ENCODE measurements at regions of chr7 and their contacts with region 1.

Region 1: GRCh38 chr7:27834179-27834921 is 94.4 kb downstream of the TAX1BP1 start:
- DNase-seq: no peak
- H3K4me3 ChIP-seq: no peak overlapping the region
- H3K27ac ChIP-seq: no peak overlapping the region
- H3K4me1 ChIP-seq: peaks cover 11% of the 10 kb centered on the region
- H3K27me3 ChIP-seq: no peaks in the 10 kb centered on the region
- CTCF ChIP-seq: no peak
- POLR2A ChIP-seq: no peak

Region 2: DNA sequence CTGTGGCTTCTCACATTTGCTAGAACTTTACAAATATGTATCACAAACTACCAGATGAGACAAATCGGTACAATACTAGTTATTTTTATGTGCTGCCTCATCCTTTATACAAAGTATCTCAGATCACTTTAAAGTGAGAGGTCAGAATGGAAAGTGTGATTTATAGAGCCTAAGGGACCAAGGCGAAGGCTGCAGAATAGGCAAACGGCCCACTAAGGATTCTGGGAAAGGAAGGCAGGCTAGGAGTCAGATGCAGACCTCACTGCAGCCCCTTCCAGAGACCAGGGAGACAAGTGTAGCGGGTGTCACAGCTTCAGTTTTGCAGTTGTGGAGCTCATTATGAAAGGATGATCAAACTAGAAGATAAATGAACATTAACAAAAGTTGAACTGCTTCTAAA is 362.3 kb before region 1 on chr7:
- CTCF ChIA-PET with region 1: no interaction called
- POLR2A ChIA-PET with region 1: no interaction called
- dilution Hi-C with region 1: no loop called
- intact Hi-C with region 1: no loop called
- DNase-seq: no peak
- H3K4me3 ChIP-seq: no peak overlapping the region
- H3K27ac ChIP-seq: no peak overlapping the region
- H3K4me1 ChIP-seq: no peaks in the 10 kb centered on the region
- H3K27me3 ChIP-seq: peaks cover 18 to 19% of the 10 kb centered on the region in 2 experiments
- CTCF ChIP-seq: no peak
- POLR2A ChIP-seq: no peak

Region 3: DNA sequence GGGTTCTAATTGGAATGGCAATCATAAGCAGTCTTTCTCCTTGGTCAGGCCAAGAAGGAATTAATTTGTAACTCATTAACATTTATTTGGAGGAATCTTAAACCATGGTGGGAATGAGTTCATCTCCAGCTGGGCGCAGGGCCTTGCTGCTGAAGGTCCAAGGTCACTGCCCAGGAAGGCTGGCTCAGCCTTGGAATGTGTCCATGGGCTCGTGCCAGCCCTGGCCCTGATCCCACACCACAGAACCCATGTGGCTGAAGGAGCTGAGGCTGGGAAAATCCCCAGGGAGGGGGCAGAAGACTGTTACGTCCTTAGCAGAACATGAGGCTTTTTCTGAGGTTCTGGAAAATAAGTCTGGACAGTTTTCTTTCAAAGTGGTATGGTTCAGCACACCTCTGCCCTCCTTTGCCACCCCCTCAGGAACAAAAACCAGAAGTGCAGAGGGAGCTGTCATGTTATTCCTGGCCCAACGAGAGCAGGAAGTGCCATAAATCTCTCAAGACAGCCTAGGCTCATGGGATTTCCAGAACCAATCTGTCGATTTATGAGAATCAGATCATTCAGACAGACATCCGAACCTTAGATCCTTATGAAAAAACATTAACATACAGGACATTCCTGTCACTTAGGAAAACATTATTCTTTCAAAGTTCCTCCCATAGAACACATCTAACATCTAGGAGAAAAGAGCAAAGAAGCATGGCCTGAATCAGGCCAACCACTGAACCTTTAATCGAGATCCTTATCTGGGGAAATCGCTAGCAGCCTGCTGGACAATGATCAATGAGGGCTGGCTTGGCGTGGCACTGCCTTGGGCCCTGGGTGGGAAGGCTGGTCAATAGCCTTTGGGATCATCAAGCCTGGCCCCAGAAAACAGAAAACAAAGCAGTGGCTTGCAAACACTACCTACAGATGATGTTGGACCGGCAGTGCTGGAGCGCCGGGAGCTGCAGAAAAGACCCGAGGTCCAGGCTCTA is 39.9 kb after region 1 on chr7:
- CTCF ChIA-PET with region 1: interaction called, 3 read pairs
- POLR2A ChIA-PET with region 1: no interaction called
- dilution Hi-C with region 1: no loop called
- intact Hi-C with region 1: loop called (anchors 1 kb)
- DNase-seq: peak; percentile 98
- H3K4me3 ChIP-seq: peak overlapping the region in 1 of 3 experiments; percentile 10
- H3K27ac ChIP-seq: peak overlapping the region; percentile 95
- H3K4me1 ChIP-seq: peaks cover 34% of the 10 kb centered on the region
- H3K27me3 ChIP-seq: no peaks in the 10 kb centered on the region
- CTCF ChIP-seq: no peak
- POLR2A ChIP-seq: peak; percentile 56

Region 4: GRCh38 chr7:27883696-27884095 is 49.3 kb after region 1 on chr7:
- CTCF ChIA-PET with region 1: no interaction called
- POLR2A ChIA-PET with region 1: no interaction called
- dilution Hi-C with region 1: no loop called
- intact Hi-C with region 1: loop called (anchors 1 kb)
- DNase-seq: peak; percentile 81
- H3K4me3 ChIP-seq: peak overlapping the region in 1 of 3 experiments; percentile 0
- H3K27ac ChIP-seq: peak overlapping the region; percentile 85
- H3K4me1 ChIP-seq: peaks cover 31% of the 10 kb centered on the region
- H3K27me3 ChIP-seq: no peaks in the 10 kb centered on the region
- CTCF ChIP-seq: no peak
- POLR2A ChIP-seq: peak; percentile 40

Measured in endothelial cell of umbilical vein (primary cell).